Activated CD8-positive, alpha-beta T cell treated with anti-CD3 and anti-CD28 coated beads for 36 hours (primary cell): ENCODE measurements at regions of chr4 and their contacts with region 1.

Region 1: GRCh38 chr4:15457406-15458201 is 12.1 kb upstream of the CC2D2A start:
- DNase-seq: no peak
- ATAC-seq: peak; percentile 65
- H3K4me3 Mint-ChIP-seq: no peak overlapping the region
- H3K27ac Mint-ChIP-seq: no peak overlapping the region
- H3K4me1 Mint-ChIP-seq: peaks cover 2% of the 10 kb centered on the region
- H3K27me3 Mint-ChIP-seq: no peaks in the 10 kb centered on the region
- CTCF ChIP-seq: peak; percentile 79

Region 2: GRCh38 chr4:15231265-15232091 is 226.1 kb before region 1 on chr4:
- CTCF ChIA-PET with region 1: interaction called, 124 read pairs
- POLR2A ChIA-PET with region 1: no interaction called
- intact Hi-C with region 1: loop called (anchors 2 kb)
- DNase-seq: peak; percentile 87
- ATAC-seq: peak; percentile 69
- H3K4me3 Mint-ChIP-seq: no peak overlapping the region
- H3K27ac Mint-ChIP-seq: no peak overlapping the region
- H3K4me1 Mint-ChIP-seq: peaks cover 33% of the 10 kb centered on the region
- H3K27me3 Mint-ChIP-seq: no peaks in the 10 kb centered on the region
- CTCF ChIP-seq: peak; percentile 90

Region 3: GRCh38 chr4:15253201-15253748 is 204.3 kb before region 1 on chr4:
- CTCF ChIA-PET with region 1: interaction called, 26 read pairs
- POLR2A ChIA-PET with region 1: no interaction called
- intact Hi-C with region 1: no loop called
- DNase-seq: no peak
- ATAC-seq: no peak
- H3K4me3 Mint-ChIP-seq: no peak overlapping the region
- H3K27ac Mint-ChIP-seq: no peak overlapping the region
- H3K4me1 Mint-ChIP-seq: no peaks in the 10 kb centered on the region
- H3K27me3 Mint-ChIP-seq: no peaks in the 10 kb centered on the region
- CTCF ChIP-seq: no peak

Region 4: DNA sequence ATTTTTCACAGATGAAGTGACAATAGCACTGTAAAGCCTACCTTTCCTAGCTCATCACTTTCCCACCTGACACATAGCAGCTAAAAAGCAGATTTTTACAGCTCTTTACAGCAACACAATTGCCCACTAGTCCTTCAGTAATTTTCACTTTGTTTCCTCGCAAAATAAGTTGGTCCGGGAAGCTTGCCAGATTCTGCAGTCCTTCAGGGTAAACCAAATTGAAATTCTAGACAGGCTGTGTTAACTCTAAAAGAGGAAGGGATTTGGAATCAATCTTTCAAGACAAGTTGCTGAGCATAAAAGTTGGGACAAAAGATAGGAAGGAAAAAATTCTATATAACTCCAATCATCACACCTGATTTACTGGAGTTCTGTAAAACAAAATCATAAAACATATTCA is 21.1 kb before region 1 on chr4:
- CTCF ChIA-PET with region 1: interaction called, 13 read pairs
- POLR2A ChIA-PET with region 1: no interaction called
- intact Hi-C with region 1: no loop called
- DNase-seq: no peak
- ATAC-seq: no peak
- H3K4me3 Mint-ChIP-seq: no peak overlapping the region
- H3K27ac Mint-ChIP-seq: no peak overlapping the region
- H3K4me1 Mint-ChIP-seq: no peaks in the 10 kb centered on the region
- H3K27me3 Mint-ChIP-seq: no peaks in the 10 kb centered on the region
- CTCF ChIP-seq: no peak

Region 5: DNA sequence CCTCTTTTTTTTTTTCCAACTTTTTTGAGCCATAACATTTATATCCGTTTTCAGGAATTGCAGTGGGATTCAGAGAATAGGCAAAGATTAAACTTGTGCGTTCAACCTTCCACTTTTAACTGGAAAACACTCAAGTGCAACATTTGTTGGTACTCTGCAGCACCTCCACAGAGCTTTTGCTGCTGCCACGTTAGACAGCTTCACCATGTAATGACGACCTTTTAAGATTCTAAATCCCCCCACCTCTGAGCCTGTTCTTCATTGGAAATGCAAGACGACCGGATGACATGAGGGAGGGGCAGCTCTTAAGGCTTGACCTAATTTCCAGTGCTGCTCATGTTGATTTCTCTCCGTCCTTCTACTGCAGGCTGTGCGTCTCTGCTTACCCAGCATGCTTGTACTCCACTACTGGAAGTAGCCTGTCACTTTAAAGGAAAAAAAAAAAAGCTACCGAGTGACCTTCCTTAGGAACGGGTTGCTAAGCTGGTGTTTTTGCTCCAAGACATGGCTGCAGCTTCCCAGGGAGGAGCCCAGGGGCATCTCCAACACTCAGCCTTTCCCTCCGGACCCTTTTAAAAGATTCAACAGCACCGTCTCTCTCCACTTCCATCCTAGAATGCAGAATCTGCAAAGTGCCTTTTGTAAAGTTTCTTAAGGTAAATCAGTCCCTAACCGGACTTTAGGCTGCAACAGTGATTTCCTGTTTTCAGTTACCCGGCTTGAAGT is 12.0 kb after region 1 on chr4 and contains the start of gene CC2D2A:
- CTCF ChIA-PET with region 1: interaction called, 28 read pairs
- POLR2A ChIA-PET with region 1: no interaction called
- intact Hi-C with region 1: no loop called
- DNase-seq: no peak
- ATAC-seq: peak; percentile 30
- H3K4me3 Mint-ChIP-seq: peak within 1 kb of the TSS; percentile 8
- H3K27ac Mint-ChIP-seq: no peak within 1 kb of the TSS
- H3K4me1 Mint-ChIP-seq: peaks cover 11% of the 10 kb centered on the region
- H3K27me3 Mint-ChIP-seq: no peaks in the 10 kb centered on the region
- CTCF ChIP-seq: no peak
- total RNA-seq, gene CC2D2A: not detected

Region 6: DNA sequence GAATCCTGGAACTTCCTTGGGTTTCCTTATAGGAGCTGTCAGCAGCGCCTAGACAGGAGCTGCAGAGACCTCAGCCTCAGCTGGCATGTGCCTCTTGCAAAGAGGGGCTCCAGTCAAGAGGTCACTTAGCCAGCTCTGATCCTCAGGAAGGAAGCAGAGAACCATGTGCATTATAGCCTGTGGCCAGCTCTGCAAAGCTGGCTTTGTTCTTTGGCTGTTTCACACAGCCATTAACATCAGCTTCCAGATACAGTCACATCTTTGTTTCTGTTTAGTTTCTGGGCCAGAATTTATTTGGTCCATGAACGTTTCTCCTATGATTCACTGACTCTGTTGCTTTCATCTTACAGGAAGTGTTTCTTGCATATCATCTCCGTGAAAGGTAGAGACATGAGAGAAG is 104.5 kb after region 1 on chr4:
- CTCF ChIA-PET with region 1: no interaction called
- POLR2A ChIA-PET with region 1: no interaction called
- intact Hi-C with region 1: no loop called
- DNase-seq: no peak
- ATAC-seq: no peak
- H3K4me3 Mint-ChIP-seq: no peak overlapping the region
- H3K27ac Mint-ChIP-seq: no peak overlapping the region
- H3K4me1 Mint-ChIP-seq: no peaks in the 10 kb centered on the region
- H3K27me3 Mint-ChIP-seq: no peaks in the 10 kb centered on the region
- CTCF ChIP-seq: no peak